T-cell (primary cell): ENCODE measurements at regions of chr12 and their contacts with region 1.

Region 1: DNA sequence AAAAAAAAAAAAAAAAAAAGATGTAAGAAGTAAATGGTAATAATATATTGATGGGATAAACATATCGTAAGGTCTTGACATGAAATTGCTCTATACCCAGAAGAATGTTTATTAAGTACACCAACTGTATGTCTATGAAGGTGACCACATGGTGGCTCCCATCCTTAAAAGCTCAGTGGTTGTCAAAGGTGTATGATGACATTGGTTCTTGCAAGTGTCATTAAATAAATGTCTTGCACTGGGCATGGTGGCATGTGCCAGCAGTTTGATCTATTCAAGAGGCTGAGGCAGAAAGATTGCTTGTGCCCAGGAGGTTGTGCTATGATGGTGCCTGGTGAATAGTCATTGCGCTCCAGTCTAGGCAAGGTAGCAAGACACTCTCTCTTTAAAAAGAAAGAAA is 10.4 kb downstream of the CCT2 start:
- DNase-seq: no peak
- ATAC-seq: no peak
- H3K4me3 ChIP-seq: no peak overlapping the region
- H3K4me3 Mint-ChIP-seq: no peak overlapping the region
- H3K27ac ChIP-seq: no peak overlapping the region
- H3K27ac Mint-ChIP-seq: no peak overlapping the region
- H3K4me1 ChIP-seq: no peaks in the 10 kb centered on the region
- H3K4me1 Mint-ChIP-seq: peaks cover 0 to 8% (median 5%) of the 10 kb centered on the region in 3 donors
- H3K27me3 ChIP-seq: no peaks in the 10 kb centered on the region
- H3K27me3 Mint-ChIP-seq: no peaks in the 10 kb centered on the region

Region 2: DNA sequence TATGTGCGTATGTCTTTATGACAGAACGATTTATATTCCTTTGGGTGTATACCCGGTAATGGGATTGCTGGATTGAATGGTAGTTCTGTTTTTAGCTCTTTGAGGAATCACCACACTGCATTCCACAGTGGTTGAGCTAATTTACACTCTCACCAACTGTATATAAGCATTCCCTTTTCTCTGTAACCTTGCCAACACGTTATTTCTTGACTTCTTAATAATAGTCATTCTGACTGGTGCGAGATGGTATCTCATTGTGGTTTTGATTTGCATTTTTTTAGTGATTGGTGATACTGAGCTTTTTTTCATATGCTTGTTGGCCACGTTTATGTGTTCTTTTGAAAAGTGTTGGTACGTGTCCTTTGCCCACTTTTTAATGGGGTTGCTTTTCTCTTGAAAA is 75.8 kb before region 1 on chr12:
- CTCF ChIA-PET with region 1: no interaction called
- POLR2A ChIA-PET with region 1: interaction called in 1 of 2 experiments, 15 read pairs
- DNase-seq: no peak
- ATAC-seq: no peak
- H3K4me3 ChIP-seq: no peak overlapping the region
- H3K4me3 Mint-ChIP-seq: no peak overlapping the region
- H3K27ac ChIP-seq: no peak overlapping the region
- H3K27ac Mint-ChIP-seq: no peak overlapping the region
- H3K4me1 ChIP-seq: peaks cover 0 to 11% of the 10 kb centered on the region in 2 experiments
- H3K4me1 Mint-ChIP-seq: peaks cover 47 to 55% (median 49%) of the 10 kb centered on the region in 3 donors
- H3K27me3 ChIP-seq: no peaks in the 10 kb centered on the region
- H3K27me3 Mint-ChIP-seq: no peaks in the 10 kb centered on the region

Region 3: GRCh38 chr12:69534389-69534822 is 61.3 kb before region 1 on chr12:
- CTCF ChIA-PET with region 1: no interaction called
- POLR2A ChIA-PET with region 1: interaction called in 1 of 2 experiments, 10 read pairs
- DNase-seq: peak in 1 of 35 experiments; percentile 11
- ATAC-seq: peak in 1 of 4 experiments; percentile 45
- H3K4me3 ChIP-seq: no peak overlapping the region
- H3K4me3 Mint-ChIP-seq: no peak overlapping the region
- H3K27ac ChIP-seq: no peak overlapping the region
- H3K27ac Mint-ChIP-seq: peak overlapping the region in 1 of 2 donors; percentile 6
- H3K4me1 ChIP-seq: peaks cover 0 to 3% of the 10 kb centered on the region in 2 experiments
- H3K4me1 Mint-ChIP-seq: peaks cover 25 to 27% (median 26%) of the 10 kb centered on the region in 3 donors
- H3K27me3 ChIP-seq: no peaks in the 10 kb centered on the region
- H3K27me3 Mint-ChIP-seq: no peaks in the 10 kb centered on the region